Activated naive CD4-positive, alpha-beta T cell treated with anti-CD3 and anti-CD28 coated beads for 36 hours (primary cell): ENCODE measurements at regions of chr15 and their contacts with region 1.

Region 1: GRCh38 chr15:23506762-23507161 is 58.7 kb upstream of the MKRN3 start:
- DNase-seq: no peak
- H3K4me3 Mint-ChIP-seq: no peak overlapping the region
- H3K27ac Mint-ChIP-seq: no peak overlapping the region
- H3K4me1 Mint-ChIP-seq: peaks cover 2% of the 10 kb centered on the region
- H3K27me3 Mint-ChIP-seq: peaks cover 3% of the 10 kb centered on the region

Region 2: DNA sequence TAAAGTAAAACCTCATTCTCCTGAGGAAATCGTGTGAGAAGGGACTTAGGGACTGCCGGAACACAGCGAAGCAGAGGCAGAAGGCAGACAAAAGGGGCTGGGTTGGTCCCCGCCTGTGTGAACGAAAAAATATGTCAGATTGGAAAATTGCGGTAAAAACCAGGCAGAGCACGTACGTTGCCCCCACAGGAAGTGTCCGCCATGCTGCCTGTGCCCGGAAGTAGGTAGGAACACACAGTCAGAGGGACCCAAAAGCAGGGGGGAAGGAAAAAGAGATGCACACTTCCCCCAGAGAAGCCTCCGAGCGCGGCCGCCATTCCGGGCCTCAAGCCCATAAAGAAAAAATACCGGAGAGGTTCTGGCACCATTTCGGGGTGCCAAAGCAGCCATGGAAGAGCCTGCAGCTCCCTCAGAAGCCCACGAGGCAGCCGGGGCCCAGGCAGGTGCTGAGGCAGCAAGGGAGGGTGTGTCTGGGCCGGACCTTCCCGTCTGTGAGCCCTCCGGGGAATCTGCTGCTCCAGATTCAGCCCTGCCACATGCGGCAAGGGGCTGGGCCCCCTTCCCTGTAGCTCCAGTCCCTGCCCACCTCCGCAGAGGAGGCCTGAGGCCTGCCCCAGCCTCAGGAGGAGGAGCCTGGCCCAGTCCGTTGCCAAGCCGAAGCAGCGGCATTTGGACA is 58.8 kb after region 1 on chr15 and contains the start of gene MKRN3:
- CTCF ChIA-PET with region 1: interaction called, 3 read pairs
- intact Hi-C with region 1: loop called (anchors 5 kb)
- DNase-seq: peak; percentile 67
- H3K4me3 Mint-ChIP-seq: peak within 1 kb of the TSS; percentile 79
- H3K27ac Mint-ChIP-seq: peak within 1 kb of the TSS; percentile 92
- H3K4me1 Mint-ChIP-seq: peaks cover 6% of the 10 kb centered on the region
- H3K27me3 Mint-ChIP-seq: peaks cover 13% of the 10 kb centered on the region
- total RNA-seq, gene MKRN3: 2.5 to 3.2 TPM

Region 3: GRCh38 chr15:25416693-25417092 is 1909.9 kb after region 1 on chr15:
- CTCF ChIA-PET with region 1: no interaction called
- intact Hi-C with region 1: no loop called
- DNase-seq: peak; percentile 30
- H3K4me3 Mint-ChIP-seq: no peak overlapping the region
- H3K27ac Mint-ChIP-seq: peak overlapping the region; percentile 68
- H3K4me1 Mint-ChIP-seq: peaks cover 57% of the 10 kb centered on the region
- H3K27me3 Mint-ChIP-seq: no peaks in the 10 kb centered on the region